ENCODE measurements at regions of chr2 and their contacts with region 1.

Region 1: GRCh38 chr2:31886697-31887096 is 124.1 kb downstream of the MEMO1 start:
- DNase-seq: peak; percentile 10
- H3K4me3 Mint-ChIP-seq: no peak overlapping the region
- H3K27ac Mint-ChIP-seq: no peak overlapping the region
- H3K4me1 Mint-ChIP-seq: no peaks in the 10 kb centered on the region
- H3K27me3 Mint-ChIP-seq: no peaks in the 10 kb centered on the region
- CTCF ChIP-seq: no peak

Region 2: DNA sequence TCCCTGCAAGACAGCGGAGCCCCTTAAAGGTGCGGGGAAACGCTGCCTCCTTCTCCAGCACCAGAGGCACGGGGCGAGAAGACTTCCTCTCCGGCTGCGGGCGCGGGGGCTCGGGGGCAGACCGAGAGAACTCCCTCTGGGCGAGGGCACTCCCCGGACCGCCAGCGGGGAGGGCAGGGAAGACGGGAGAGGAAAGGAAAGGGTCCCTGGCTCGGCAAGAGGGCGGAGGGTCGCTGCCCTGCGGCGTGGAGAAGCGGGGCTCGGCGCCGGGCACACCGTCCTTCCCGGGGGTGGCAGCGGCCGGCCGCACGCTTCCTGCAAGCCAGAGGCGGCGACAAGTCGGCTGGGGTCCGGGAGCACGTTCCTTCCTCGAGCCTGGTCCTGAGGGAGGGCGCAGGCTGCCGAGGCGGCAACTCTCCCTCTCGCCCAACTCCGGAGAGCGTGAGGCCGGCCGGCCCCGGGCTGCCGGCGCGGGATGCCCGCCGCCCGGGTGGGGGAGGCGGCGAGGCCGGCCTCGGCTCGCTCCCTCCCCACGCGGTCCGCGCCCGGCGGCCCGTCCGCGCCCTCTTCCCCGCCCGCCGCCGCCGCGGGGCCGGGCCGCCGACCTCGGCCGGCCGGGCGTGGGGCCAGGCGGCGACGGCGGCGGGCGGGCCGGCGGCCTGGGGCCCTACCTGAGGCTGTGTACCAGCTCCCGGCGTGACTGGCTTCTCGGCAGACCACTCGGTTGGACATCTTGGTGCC is 123.0 kb after region 1 on chr2:
- CTCF ChIA-PET with region 1: interaction called, 3 read pairs
- intact Hi-C with region 1: loop called (anchors 10 kb)
- DNase-seq: peak; percentile 35
- H3K4me3 Mint-ChIP-seq: peak overlapping the region; percentile 87
- H3K27ac Mint-ChIP-seq: peak overlapping the region; percentile 72
- H3K4me1 Mint-ChIP-seq: peaks cover 32% of the 10 kb centered on the region
- H3K27me3 Mint-ChIP-seq: no peaks in the 10 kb centered on the region
- CTCF ChIP-seq: no peak

Measured in Calu3 (cell line).